ENCODE measurements at regions of chr5 and their contacts with region 1.

Region 1: GRCh38 chr5:149367249-149367971 is 9.6 kb downstream of the PCYOX1L start:
- DNase-seq: peak; percentile 83
- H3K4me3 ChIP-seq: no peak overlapping the region
- H3K27ac ChIP-seq: no peak overlapping the region
- H3K4me1 ChIP-seq: no peaks in the 10 kb centered on the region
- H3K27me3 ChIP-seq: no peaks in the 10 kb centered on the region
- CTCF ChIP-seq: peak; percentile 88

Region 2: DNA sequence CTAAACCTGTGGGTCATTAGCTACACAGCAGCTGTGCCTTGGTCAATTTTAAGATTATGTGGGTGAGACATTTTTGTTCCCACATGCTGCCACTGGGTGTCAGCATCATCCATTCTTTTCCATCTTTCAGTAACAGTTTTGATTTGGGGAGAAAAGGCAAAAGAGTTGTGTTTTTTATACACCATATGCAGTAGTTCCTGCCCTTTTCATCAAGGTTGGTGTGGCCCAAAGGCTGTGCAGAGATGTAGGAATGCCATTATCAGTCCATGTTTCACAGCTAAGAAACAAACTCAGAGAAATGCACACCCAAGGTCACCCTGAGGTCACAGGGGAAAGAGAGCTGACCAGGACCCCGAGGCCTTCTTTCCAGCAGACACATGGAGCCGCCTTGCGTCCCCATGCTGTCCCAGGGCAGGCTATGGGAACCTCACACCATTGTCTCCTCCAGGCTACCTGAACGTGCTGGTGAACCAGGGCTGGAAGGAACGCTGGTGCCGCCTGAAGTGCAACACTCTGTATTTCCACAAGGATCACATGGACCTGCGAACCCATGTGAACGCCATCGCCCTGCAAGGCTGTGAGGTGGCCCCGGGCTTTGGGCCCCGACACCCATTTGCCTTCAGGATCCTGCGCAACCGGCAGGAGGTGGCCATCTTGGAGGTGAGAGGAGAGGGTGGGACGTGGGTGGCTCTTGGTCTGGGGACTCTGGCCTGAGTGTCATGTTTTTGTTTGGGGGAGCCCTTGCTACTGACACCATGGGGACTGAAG is 49.9 kb before region 1 on chr5:
- CTCF ChIA-PET with region 1: interaction called, 12 read pairs
- POLR2A ChIA-PET with region 1: no interaction called
- intact Hi-C with region 1: loop called (anchors 2 kb)
- DNase-seq: peak; percentile 65
- H3K4me3 ChIP-seq: no peak overlapping the region
- H3K27ac ChIP-seq: no peak overlapping the region
- H3K4me1 ChIP-seq: peaks cover 11% of the 10 kb centered on the region
- H3K27me3 ChIP-seq: no peaks in the 10 kb centered on the region
- CTCF ChIP-seq: peak; percentile 79

Measured in A673 (cell line).